ENCODE measurements at regions of chr22 and their contacts with region 1.

Region 1: GRCh38 chr22:42649246-42650099 is at the start of gene CYB5R3:
- DNase-seq: peak; percentile 95

Region 2: DNA sequence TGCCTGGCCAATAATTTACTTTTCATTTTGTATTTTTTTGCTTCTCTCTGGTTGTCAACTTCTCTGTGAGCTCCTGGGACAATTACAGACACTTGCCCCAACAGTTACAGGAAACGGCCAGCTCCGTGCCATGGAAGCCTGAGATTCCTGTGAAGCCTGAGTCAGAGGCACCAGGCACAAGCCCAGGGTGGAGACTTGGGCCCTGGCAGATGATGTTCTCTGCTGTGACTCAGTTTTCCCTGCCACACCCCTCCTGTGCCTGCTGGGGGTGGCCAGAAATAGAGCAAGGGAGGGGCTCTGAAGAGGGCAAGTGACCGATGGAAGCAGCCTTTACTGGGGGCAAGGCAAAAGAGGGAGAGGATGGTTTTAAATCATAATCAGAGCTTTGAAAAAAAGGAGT is 13.9 kb before region 1 on chr22:
- CTCF ChIA-PET with region 1: interaction called, 3 read pairs
- POLR2A ChIA-PET with region 1: interaction called, 22 read pairs
- DNase-seq: no peak

Region 3: GRCh38 chr22:42697542-42698013 is 48.1 kb after region 1 on chr22:
- CTCF ChIA-PET with region 1: no interaction called
- POLR2A ChIA-PET with region 1: interaction called, 10 read pairs
- DNase-seq: no peak

Region 4: GRCh38 chr22:42786606-42787356 is 137.3 kb after region 1 on chr22:
- CTCF ChIA-PET with region 1: no interaction called
- POLR2A ChIA-PET with region 1: no interaction called
- DNase-seq: no peak

Measured in HEK293T (cell line).